ENCODE measurements at regions of chr10 and their contacts with region 1.

Region 1: DNA sequence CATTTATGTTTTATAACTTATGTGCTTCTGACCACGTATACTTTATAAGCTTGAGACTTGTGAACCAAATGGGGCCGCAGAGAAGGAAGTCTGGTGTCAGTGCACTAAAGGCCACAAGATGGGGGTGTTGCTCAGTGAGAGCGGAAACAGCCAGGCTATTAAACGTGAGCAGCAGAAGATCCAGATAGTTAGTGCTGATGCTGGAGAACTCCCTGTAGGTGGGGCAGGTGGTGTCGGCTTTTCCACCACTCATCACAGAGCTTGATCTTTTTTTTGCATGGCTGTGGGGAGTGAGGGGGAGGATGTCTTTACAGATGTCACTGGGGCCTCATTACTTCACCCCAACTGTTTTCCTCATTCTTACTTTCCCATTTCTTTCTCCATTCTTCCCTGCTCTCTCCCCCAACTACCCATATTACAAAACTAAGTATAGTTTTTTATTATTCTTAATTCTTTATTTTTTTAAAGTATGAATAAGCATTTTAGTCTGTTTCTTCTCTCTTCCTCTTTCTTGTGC is 34.7 kb downstream of the ACADSB start:
- DNase-seq: peak; percentile 62 to 82 (median 79)
- H3K4me3 ChIP-seq: no peak overlapping the region
- H3K27ac ChIP-seq: no peak overlapping the region
- H3K4me1 ChIP-seq: peaks cover 0 to 23% (median 16%) of the 10 kb centered on the region in 4 experiments
- H3K27me3 ChIP-seq: no peaks in the 10 kb centered on the region

Region 2: DNA sequence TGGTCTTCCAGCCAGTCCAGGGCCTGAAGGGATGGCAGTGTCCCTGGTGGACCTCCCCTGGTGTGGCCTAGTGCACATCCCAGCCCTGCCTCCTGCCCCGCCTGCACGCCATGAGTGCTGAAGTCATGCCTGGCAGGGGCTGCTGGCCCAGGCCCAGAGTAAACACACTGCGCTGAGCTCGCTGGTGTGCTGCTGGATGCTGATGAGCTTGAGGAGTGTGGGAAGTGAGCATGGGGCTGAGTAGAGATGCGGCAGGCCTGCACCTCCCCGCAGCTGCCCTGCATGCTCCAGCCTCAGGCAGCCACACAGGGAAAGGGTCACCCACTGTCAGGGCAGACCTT is 538.9 kb before region 1 on chr10:
- CTCF ChIA-PET with region 1: no interaction called
- POLR2A ChIA-PET with region 1: no interaction called
- DNase-seq: no peak
- H3K4me3 ChIP-seq: no peak overlapping the region
- H3K27ac ChIP-seq: no peak overlapping the region
- H3K4me1 ChIP-seq: no peaks in the 10 kb centered on the region
- H3K27me3 ChIP-seq: peaks cover 0 to 23% (median 0%) of the 10 kb centered on the region in 5 experiments

Region 3: GRCh38 chr10:122980209-122981065 is 63.0 kb before region 1 on chr10 and contains the start of gene PSTK:
- CTCF ChIA-PET with region 1: interaction called, 17 read pairs
- POLR2A ChIA-PET with region 1: no interaction called
- DNase-seq: peak; percentile 94 to 96 (median 96)
- H3K4me3 ChIP-seq: peak within 1 kb of the TSS; percentile 65 to 90 (median 82)
- H3K27ac ChIP-seq: peak within 1 kb of the TSS; percentile 60 to 85
- H3K4me1 ChIP-seq: peaks cover 9 to 19% (median 14%) of the 10 kb centered on the region in 4 experiments
- H3K27me3 ChIP-seq: no peaks in the 10 kb centered on the region

Region 4: GRCh38 chr10:122999347-122999746 is 44.1 kb before region 1 on chr10:
- CTCF ChIA-PET with region 1: no interaction called
- POLR2A ChIA-PET with region 1: no interaction called
- DNase-seq: no peak
- H3K4me3 ChIP-seq: no peak overlapping the region
- H3K27ac ChIP-seq: no peak overlapping the region
- H3K4me1 ChIP-seq: no peaks in the 10 kb centered on the region
- H3K27me3 ChIP-seq: no peaks in the 10 kb centered on the region

Region 5: GRCh38 chr10:123100030-123100762 is 56.7 kb after region 1 on chr10:
- CTCF ChIA-PET with region 1: no interaction called
- POLR2A ChIA-PET with region 1: no interaction called
- DNase-seq: no peak
- H3K4me3 ChIP-seq: no peak overlapping the region
- H3K27ac ChIP-seq: no peak overlapping the region
- H3K4me1 ChIP-seq: no peaks in the 10 kb centered on the region
- H3K27me3 ChIP-seq: peaks cover 0 to 32% (median 5%) of the 10 kb centered on the region in 5 experiments

Region 6: GRCh38 chr10:123559066-123559822 is 515.8 kb after region 1 on chr10:
- CTCF ChIA-PET with region 1: interaction called, 23 read pairs
- POLR2A ChIA-PET with region 1: no interaction called
- DNase-seq: peak; percentile 32 to 55 (median 43)
- H3K4me3 ChIP-seq: no peak overlapping the region
- H3K27ac ChIP-seq: no peak overlapping the region
- H3K4me1 ChIP-seq: no peaks in the 10 kb centered on the region
- H3K27me3 ChIP-seq: peaks cover 2 to 8% (median 5%) of the 10 kb centered on the region in 5 experiments